ENCODE measurements at regions of chr2 and their contacts with region 1.

Region 1: GRCh38 chr2:237474931-237475703 is 11.9 kb upstream of the MLPH start:
- DNase-seq: peak; percentile 53 to 84 (median 70)
- H3K4me3 ChIP-seq: peak overlapping the region; percentile 47 to 88 (median 77)
- H3K27ac ChIP-seq: peak overlapping the region; percentile 10 to 96 (median 87)
- H3K27me3 ChIP-seq: peaks cover 0 to 9% (median 0%) of the 10 kb centered on the region in 45 donors
- CTCF ChIP-seq: peak; percentile 51 to 97 (median 87)

Region 2: GRCh38 chr2:237092920-237093781 is 382.0 kb before region 1 on chr2:
- intact Hi-C with region 1: loop called in 1 of 2 experiments (anchors 5 kb)
- DNase-seq: no peak
- H3K4me3 ChIP-seq: no peak overlapping the region
- H3K27ac ChIP-seq: no peak overlapping the region
- H3K27me3 ChIP-seq: no peaks in the 10 kb centered on the region
- CTCF ChIP-seq: peak in 52 of 56 donors; percentile 16 to 60 (median 40)

Region 3: GRCh38 chr2:237154082-237154638 is 321.0 kb before region 1 on chr2:
- intact Hi-C with region 1: loop called in 1 of 2 experiments (anchors 5 kb)
- DNase-seq: no peak
- H3K4me3 ChIP-seq: no peak overlapping the region
- H3K27ac ChIP-seq: no peak overlapping the region
- H3K27me3 ChIP-seq: peaks cover 0 to 24% (median 0%) of the 10 kb centered on the region in 45 donors
- CTCF ChIP-seq: peak in 49 of 56 donors; percentile 20 to 64 (median 38)

Region 4: DNA sequence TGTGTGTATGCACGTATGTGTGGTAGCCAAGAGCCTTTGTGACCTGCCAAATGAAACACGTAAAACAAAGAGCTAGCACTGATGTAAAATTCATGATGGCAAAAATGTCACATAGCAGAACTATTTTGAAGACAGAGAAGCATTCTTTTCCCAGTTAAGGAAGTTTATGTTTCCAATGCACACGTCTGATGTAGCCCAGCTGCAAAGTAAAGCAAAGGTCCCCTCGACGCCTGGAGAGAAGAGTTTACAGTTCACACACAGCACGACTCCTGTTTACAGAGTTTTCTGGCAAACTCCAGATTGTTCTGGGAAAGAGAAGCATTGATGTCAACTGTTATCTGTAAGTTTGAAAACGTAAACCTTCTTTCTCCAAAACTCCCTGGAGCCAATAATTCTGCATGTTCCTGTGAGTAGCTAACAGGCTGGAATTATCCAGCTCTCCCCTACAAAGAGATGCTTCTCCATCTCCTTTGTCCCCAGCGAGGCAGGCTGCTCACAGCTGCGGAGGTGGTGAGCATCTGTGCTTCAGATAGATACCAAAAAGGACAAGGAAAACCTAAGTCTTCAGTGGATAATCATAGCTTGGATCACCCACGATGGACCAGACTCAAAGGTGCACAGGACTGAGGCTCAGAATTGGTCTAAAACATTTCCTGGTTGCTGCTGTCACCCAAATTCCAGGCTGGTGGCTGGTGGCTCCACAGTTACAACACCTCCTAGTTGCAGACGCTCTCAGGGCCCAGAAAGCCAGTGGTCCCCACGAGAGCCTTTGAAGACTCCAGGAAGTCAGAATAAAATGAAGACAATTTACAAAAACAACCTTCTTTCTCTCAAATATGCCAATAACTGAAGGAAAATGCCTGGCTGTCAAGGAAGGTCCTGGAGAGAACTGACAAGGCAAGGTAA is 148.6 kb before region 1 on chr2:
- intact Hi-C with region 1: loop called in 1 of 2 experiments (anchors 5 kb)
- DNase-seq: peak in 1 of 10 donors; percentile 43
- H3K4me3 ChIP-seq: no peak overlapping the region
- H3K27ac ChIP-seq: peak overlapping the region in 7 of 59 donors; percentile 16 to 67 (median 39)
- H3K27me3 ChIP-seq: peaks cover 0 to 10% (median 0%) of the 10 kb centered on the region in 45 donors
- CTCF ChIP-seq: no peak

Region 5: GRCh38 chr2:237413777-237414661 is 61.1 kb before region 1 on chr2 and contains the start of gene COL6A3:
- intact Hi-C with region 1: loop called in 1 of 2 experiments (anchors 2 kb)
- DNase-seq: no peak
- H3K4me3 ChIP-seq: peak within 1 kb of the TSS in 20 of 59 donors; percentile 2 to 50 (median 26)
- H3K27ac ChIP-seq: peak within 1 kb of the TSS in 4 of 59 donors; percentile 5 to 61 (median 34)
- H3K27me3 ChIP-seq: peaks cover 0 to 30% (median 5%) of the 10 kb centered on the region in 45 donors
- CTCF ChIP-seq: no peak
- total RNA-seq, gene COL6A3: 0.33 to 9.0 (median 1.7) TPM

Region 6: DNA sequence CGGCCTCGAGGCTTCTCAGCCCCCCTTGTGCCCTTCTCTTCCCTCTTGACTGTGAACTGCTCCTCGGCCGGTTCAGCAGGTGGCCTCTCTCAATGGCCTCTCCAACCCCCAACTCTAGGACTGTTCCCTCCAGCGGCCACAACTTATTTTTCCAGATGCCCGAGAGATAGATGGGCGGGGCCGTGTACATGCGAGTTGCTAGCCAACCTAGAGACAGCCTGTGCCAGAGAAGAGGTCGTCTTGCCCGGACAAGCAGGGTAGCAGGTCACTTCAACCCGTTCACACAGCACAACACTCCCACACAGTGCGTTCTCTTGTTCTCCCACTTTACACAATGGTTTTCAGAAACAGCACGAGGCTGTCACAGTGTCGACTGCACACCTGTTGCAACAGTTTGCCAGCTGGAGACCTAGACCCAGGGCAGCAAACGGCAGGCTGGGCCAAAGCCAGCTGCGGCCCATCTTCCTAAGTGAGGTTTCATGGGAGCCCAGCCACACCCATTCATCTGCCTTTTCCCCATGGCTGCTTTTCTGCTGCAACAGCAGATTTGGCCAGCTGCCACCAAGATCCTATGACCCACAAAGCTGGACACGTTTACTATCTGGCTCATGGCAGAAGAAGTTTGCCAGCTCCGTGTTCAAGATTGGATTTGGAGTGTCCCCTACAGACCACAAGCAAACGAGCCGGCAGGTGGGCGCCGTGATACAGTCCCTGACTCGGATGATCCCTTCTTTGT is 84.0 kb after region 1 on chr2:
- intact Hi-C with region 1: no loop called
- DNase-seq: no peak
- H3K4me3 ChIP-seq: no peak overlapping the region
- H3K27ac ChIP-seq: no peak overlapping the region
- H3K27me3 ChIP-seq: peaks cover 0 to 13% (median 0%) of the 10 kb centered on the region in 45 donors
- CTCF ChIP-seq: no peak

Region 7: GRCh38 chr2:237572021-237572741 is 97.1 kb after region 1 on chr2:
- intact Hi-C with region 1: no loop called
- DNase-seq: peak; percentile 77 to 90 (median 86)
- H3K4me3 ChIP-seq: peak overlapping the region in 4 of 59 donors; percentile 3 to 20 (median 4)
- H3K27ac ChIP-seq: no peak overlapping the region
- H3K27me3 ChIP-seq: no peaks in the 10 kb centered on the region
- CTCF ChIP-seq: peak; percentile 90 to 100 (median 99)

Region 8: GRCh38 chr2:238706673-238707072 is 1231.6 kb after region 1 on chr2:
- intact Hi-C with region 1: no loop called
- DNase-seq: no peak
- H3K4me3 ChIP-seq: no peak overlapping the region
- H3K27ac ChIP-seq: no peak overlapping the region
- H3K27me3 ChIP-seq: peaks cover 0 to 8% (median 0%) of the 10 kb centered on the region in 45 donors
- CTCF ChIP-seq: peak in 24 of 56 donors; percentile 12 to 44 (median 20)

Measured in dorsolateral prefrontal cortex (tissue), 120 donors.